Posterior cingulate gyrus (tissue), 11 donors: ENCODE measurements at regions of chr2 and their contacts with region 1.

Region 1: DNA sequence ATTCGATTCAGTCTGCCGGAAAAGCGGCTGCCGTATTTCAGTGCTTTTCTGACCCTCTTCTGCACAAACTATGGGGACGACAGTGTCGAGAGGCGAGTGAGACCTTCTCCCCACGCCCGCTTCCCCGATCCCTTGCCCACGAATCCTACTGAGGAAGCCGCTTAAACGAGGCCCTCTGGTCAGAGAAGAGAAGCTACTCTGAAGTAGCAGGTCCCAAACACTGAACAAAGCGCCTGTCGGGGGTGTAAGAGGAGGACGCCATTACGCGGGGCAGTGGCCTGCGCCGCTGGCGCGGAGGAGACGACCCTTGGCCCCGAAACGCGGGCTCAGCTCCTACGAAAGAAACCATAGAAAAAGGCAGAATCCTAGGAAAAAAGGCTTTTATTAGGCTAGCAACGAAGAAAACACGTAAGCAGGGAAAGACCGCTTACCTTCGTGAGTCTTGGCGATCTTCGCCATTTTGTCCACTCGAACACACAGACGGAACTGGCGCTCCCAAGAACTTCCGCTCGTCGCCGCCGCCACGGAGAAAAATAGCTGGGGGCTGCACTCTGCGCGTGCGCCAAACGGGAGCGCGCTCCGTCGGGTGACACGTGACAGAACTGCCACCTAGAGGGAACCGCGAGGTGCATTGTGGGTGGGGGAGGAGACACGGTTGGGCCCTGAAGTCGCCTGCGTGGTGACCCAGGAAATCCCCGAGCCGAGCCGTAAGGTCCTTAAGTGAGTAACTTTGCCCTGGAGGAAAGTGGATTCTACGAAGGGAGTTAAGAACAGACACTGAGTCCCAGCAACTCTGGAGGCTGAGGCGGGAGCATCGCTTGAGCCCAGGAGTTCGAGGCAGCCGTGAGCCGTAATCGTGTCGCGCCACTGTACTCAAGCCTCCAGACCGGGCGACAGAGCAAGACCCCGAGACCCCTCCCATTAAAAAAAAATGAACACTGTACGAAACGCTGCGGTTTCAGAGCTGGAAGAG is at the start of gene SF3B1:
- DNase-seq: peak; percentile 93 to 99 (median 98)

Region 2: DNA sequence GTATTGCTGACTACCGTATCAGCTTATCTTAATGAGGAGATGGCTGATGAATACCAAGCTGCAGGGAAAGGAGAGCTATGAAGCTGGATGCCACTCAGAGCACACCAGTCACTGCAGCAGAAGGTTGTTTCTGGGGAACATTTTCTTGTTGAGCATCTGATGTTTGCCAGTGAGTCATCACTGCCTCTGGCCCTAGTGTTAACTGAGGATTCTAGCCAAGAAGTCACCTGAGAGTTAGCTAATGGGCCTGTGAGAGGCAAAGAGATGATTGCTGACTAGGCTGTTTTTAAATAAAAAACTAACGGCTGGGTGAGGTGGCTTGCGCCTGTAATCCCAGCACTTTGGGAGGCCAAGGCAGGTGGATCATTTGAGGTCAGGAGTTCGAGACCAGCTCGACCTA is 757.4 kb before region 1 on chr2:
- intact Hi-C with region 1: no loop called
- DNase-seq: no peak

Region 3: GRCh38 chr2:197124639-197125390 is 310.0 kb before region 1 on chr2:
- intact Hi-C with region 1: no loop called
- DNase-seq: no peak

Region 4: DNA sequence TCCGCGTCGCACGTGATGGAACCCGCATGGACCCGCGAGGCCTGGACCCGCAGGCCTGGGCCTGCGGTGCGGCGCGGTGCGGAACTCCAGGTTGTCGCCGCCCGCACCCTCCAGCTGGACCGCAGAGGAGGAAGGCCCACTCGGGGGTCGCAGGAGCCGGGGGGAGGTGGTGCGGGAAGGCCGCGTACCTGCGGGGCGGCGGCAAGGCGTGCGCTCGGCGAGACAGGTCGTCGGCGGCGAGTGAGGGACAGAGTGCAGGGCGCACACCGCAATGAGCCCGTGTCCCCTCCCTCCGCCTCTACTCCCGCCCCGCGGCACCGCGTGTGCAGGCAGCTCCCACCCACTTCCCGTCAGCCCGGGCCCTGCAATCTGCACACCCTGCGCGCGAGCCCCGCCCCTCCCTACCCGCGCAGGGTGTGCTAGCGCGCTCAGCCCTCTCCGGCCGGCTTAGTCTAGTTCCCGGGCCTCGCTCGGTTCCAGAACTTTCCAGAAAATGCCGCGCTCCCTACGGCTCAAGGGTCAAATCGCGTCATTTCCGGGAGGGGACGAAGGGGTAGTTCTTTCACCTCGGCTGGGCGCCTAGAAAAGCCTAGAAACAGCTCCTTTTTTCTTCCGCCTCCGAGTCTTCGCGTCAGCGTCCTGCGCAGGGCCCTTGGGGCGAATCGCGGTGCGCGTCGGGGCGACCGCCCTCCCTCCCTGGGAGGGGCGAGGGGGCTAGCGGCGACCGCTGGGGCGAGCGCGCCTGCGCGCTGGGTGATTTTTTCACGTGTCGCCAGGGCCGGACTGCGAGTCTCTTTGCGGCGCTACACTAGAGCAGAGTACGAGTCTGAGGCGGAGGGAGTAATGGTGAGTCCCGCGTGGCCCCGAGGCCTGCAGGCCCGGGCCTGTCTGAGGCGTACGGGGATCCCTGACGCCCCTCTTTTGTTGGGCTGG is 65.0 kb after region 1 on chr2 and contains the starts of genes HSPD1 and HSPE1:
- intact Hi-C with region 1: loop called (anchors 5 kb)
- DNase-seq: peak; percentile 93 to 100 (median 98)